Activated CD4-positive, alpha-beta memory T cell treated with anti-CD3 and anti-CD28 coated beads, Interleukin-2, amount 10 ng/mL, durations not matched to agents 7 days and 5 days (primary cell): ENCODE measurements at regions of chr2 and their contacts with region 1.

Region 1: GRCh38 chr2:88627056-88627855 is at the start of gene EIF2AK3:
- DNase-seq: peak; percentile 97
- H3K4me3 Mint-ChIP-seq: no peak within 1 kb of the TSS
- H3K27ac Mint-ChIP-seq: peak within 1 kb of the TSS; percentile 90
- H3K4me1 Mint-ChIP-seq: peaks cover 28% of the 10 kb centered on the region
- H3K27me3 Mint-ChIP-seq: no peaks in the 10 kb centered on the region
- total RNA-seq, gene EIF2AK3: 29.2 to 31.5 TPM

Region 2: DNA sequence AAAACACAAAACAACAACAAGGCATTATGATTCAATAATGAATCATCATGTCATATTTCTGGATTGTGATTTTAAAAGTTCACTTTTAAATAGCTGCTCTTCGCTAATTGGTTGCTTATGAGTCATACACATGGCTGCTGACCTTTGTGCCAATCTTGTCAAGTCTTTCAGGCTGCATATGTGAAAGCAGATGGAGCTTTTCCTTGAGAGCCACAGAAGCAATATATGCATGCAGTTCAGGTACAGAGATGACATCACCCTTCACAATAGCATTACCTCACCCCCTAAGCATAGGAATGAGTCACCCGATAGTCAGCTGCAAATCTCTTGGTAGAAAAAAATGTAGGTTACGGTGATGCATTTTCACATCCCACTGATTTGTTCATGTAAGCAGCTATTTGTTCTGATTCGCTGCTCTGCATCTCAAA is 27.2 kb before region 1 on chr2:
- CTCF ChIA-PET with region 1: interaction called, 4 read pairs
- POLR2A ChIA-PET with region 1: interaction called, 24 read pairs
- DNase-seq: peak; percentile 48
- H3K4me3 Mint-ChIP-seq: no peak overlapping the region
- H3K27ac Mint-ChIP-seq: no peak overlapping the region
- H3K4me1 Mint-ChIP-seq: peaks cover 28% of the 10 kb centered on the region
- H3K27me3 Mint-ChIP-seq: no peaks in the 10 kb centered on the region

Region 3: DNA sequence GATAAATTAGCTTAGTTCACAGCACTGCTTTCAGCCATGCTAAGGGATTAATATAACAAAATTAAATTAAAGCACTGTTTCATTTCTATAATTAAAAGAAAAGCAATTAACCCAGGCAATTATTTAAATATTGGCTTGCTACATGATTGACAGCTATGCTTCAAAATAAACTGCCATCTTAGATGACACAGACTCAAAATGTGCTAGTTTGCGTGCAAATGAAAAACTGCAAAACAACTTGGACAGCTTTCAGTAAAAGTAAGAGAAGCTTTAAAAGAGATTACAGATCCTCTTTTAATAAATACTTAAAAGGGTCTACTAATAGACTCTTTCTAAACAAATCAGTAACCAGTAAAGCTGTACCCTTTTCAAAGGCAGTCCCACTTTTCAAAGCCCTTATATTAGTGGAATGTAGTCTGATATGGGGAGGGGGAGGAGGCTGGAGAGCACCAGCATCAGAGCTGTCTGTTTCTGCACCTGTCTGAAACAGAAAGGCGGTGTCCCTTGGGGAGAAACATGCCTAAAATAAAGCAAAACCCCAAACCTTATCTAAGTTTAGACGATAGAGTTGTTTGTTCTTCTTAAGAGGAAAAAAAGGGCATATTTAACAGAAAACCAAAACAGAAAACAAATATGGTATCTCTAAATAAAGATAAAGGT is 20.8 kb before region 1 on chr2:
- CTCF ChIA-PET with region 1: no interaction called
- POLR2A ChIA-PET with region 1: interaction called, 24 read pairs
- DNase-seq: no peak
- H3K4me3 Mint-ChIP-seq: no peak overlapping the region
- H3K27ac Mint-ChIP-seq: no peak overlapping the region
- H3K4me1 Mint-ChIP-seq: peaks cover 7% of the 10 kb centered on the region
- H3K27me3 Mint-ChIP-seq: no peaks in the 10 kb centered on the region

Region 4: DNA sequence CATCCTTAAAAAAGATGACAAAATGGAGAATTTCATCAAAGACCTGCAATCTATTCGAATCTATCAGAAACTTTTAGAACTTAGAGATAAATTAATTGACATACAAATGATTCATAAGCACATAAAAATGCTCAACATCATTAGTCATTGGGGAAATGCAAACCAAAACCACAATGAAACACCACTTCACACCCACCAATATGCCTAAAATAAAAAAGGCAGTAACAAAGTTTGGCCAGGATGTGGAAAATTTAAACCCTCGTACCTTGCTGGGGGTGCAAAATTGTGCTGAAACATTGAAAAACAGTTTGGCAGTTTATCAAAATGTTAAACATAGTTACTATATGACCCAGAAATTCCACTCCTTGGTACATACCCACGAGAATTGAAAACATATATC is 11.5 kb after region 1 on chr2:
- CTCF ChIA-PET with region 1: interaction called, 6 read pairs
- POLR2A ChIA-PET with region 1: interaction called, 53 read pairs
- DNase-seq: peak; percentile 48
- H3K4me3 Mint-ChIP-seq: peak overlapping the region; percentile 22
- H3K27ac Mint-ChIP-seq: peak overlapping the region; percentile 80
- H3K4me1 Mint-ChIP-seq: peaks cover 59% of the 10 kb centered on the region
- H3K27me3 Mint-ChIP-seq: no peaks in the 10 kb centered on the region

Region 5: GRCh38 chr2:88669371-88670214 is 42.3 kb after region 1 on chr2:
- CTCF ChIA-PET with region 1: interaction called, 32 read pairs
- POLR2A ChIA-PET with region 1: interaction called, 36 read pairs
- DNase-seq: peak; percentile 48
- H3K4me3 Mint-ChIP-seq: no peak overlapping the region
- H3K27ac Mint-ChIP-seq: no peak overlapping the region
- H3K4me1 Mint-ChIP-seq: peaks cover 4% of the 10 kb centered on the region
- H3K27me3 Mint-ChIP-seq: peaks cover 8% of the 10 kb centered on the region

Region 6: DNA sequence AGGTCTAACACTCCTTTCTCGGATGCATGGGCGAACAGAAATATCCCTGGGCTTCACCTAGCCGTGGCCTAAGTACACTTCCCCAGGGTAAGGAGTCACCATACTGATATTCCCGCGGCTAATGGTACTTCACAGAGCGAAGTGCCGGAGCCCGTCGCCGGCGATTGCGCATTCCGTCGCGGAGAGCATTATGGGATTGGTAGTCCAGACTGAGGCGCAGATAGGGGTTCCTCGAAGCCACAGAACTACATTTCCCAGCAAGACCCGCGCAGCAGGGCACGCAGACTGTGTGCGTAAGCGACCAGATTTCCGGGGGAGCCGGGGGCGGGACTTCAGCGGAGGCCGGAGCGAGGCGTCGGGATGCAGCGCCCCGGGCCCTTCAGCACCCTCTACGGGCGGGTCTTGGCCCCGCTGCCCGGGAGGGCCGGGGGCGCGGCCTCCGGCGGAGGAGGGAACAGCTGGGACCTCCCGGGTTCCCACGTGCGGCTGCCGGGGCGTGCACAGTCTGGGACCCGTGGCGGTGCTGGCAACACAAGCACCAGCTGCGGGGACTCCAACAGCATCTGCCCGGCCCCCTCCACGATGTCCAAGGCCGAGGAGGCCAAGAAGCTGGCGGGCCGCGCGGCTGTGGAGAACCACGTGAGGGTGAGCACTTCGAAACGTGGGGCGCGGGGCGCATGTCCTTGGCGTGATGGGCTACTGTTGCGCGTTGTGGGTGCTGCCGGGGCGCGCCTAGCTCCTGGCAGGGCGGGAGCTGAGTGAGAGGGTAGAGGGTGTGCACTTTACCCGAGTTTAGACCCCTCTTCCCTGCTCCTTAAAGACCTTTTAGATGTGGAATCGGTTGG is 64.3 kb after region 1 on chr2 and contains the start of gene RPIA:
- CTCF ChIA-PET with region 1: interaction called, 4 read pairs
- POLR2A ChIA-PET with region 1: interaction called, 24 read pairs
- DNase-seq: peak; percentile 99
- H3K4me3 Mint-ChIP-seq: peak within 1 kb of the TSS; percentile 93
- H3K27ac Mint-ChIP-seq: peak within 1 kb of the TSS; percentile 75
- H3K4me1 Mint-ChIP-seq: peaks cover 43% of the 10 kb centered on the region
- H3K27me3 Mint-ChIP-seq: no peaks in the 10 kb centered on the region
- total RNA-seq, gene RPIA: 27.9 to 30.1 TPM